ENCODE measurements at regions of chr1 and their contacts with region 1.

Region 1: DNA sequence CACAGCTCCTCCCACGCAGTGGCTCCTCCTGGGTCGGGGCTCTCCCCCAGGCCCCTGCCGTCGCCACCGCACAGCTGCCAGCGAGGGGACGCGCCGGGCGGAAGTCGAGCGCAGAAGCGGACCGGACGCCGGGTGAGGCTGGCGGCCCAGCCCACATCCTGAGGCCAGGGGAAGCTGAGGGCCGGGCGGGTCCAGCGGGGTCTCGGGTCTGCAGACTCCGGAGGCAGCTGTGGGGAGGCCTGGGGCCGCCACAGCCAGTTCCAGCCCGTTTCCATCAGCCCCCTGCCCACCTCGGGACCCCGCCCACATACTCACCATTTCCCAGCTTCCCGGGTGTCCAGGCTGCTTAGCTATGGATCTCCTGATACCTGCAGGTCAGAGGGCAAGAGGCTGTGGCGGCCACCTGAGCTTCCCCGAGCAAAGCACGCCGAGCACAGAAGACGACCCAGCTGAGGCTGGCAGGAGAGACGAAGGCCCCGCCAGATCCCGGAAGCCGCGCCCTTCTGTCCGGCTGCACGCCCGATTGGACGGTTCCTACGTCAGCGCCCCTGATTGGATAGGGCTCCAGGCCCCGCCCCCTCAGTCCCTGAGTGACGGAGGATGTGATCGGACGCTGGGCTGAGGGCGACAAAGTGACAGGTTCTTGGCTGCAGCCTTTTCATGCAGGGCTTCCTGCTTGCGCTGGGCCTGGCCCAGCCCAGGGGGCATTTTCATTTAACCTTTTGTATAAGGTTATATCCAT is 38.7 kb upstream of the ZNF124 start:
- DNase-seq: peak; percentile 88 to 95 (median 91)
- ATAC-seq: peak; percentile 99
- H3K4me3 ChIP-seq: peak overlapping the region; percentile 77
- H3K4me3 Mint-ChIP-seq: peak overlapping the region; percentile 88 to 97 (median 95)
- H3K27ac ChIP-seq: peak overlapping the region; percentile 83
- H3K27ac Mint-ChIP-seq: peak overlapping the region; percentile 92 to 97 (median 94)
- H3K4me1 ChIP-seq: peaks cover 12 to 13% of the 10 kb centered on the region in 2 donors
- H3K4me1 Mint-ChIP-seq: peaks cover 21 to 84% (median 71%) of the 10 kb centered on the region in 7 donors
- H3K27me3 ChIP-seq: no peaks in the 10 kb centered on the region
- H3K27me3 Mint-ChIP-seq: peaks cover 0 to 3% (median 0%) of the 10 kb centered on the region in 5 donors

Region 2: GRCh38 chr1:247078261-247079140 is 132.0 kb before region 1 on chr1 and contains the start of gene ZNF670:
- CTCF ChIA-PET with region 1: no interaction called
- POLR2A ChIA-PET with region 1: interaction called, 8 read pairs
- intact Hi-C with region 1: loop called (anchors 1 kb)
- DNase-seq: peak; percentile 64 to 89 (median 76)
- ATAC-seq: peak; percentile 99
- H3K4me3 ChIP-seq: peak within 1 kb of the TSS; percentile 72
- H3K4me3 Mint-ChIP-seq: peak within 1 kb of the TSS; percentile 84 to 95 (median 92)
- H3K27ac ChIP-seq: peak within 1 kb of the TSS; percentile 69
- H3K27ac Mint-ChIP-seq: peak within 1 kb of the TSS; percentile 71 to 91 (median 82)
- H3K4me1 ChIP-seq: peaks cover 6 to 8% of the 10 kb centered on the region in 2 donors
- H3K4me1 Mint-ChIP-seq: peaks cover 9 to 38% (median 32%) of the 10 kb centered on the region in 7 donors
- H3K27me3 ChIP-seq: no peaks in the 10 kb centered on the region
- H3K27me3 Mint-ChIP-seq: peaks cover 0 to 12% (median 8%) of the 10 kb centered on the region in 5 donors
- total RNA-seq, gene ZNF670: 0.56 to 4.0 (median 1.1) TPM

Region 3: DNA sequence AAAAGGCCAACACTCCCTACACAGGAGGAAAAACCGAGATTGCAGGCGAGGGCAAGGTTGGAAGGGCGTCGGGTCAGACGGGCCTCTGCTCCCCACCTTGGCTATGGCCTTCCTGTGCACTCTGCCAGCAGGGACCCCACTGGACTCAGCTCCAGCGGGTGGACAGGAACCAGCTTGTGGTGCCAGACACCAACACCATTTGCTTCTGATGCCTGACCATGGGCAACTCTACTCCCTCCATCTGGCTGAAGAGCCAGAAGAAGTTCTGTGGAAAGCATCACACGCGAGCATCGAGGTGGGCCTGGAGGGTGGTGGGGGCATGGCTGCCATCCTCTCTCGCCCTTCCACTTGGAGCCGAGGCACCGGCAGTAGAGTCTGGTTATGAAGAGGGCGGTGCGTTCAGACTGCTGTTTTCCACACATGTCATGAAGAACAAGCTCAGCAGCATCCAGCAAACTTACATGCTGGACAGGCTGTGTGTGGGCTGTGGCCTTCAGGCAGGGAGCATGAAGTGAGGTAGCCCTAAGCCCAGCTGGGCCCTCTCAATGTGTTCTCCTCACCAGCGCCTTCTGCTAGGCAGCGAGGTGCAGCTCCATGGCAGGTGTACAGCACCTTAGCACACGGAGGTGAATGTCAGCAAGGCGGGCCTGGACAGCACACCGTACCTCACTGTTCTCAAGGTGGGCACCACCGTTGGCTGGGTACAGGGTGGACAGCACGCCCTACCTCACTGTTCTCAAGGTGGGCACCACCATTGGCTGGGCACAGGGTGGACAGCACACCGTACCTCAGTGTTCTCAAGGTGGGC is 90.7 kb before region 1 on chr1:
- CTCF ChIA-PET with region 1: no interaction called
- POLR2A ChIA-PET with region 1: no interaction called
- intact Hi-C with region 1: loop called in 1 of 2 experiments (anchors 5 kb)
- DNase-seq: no peak
- ATAC-seq: peak; percentile 32
- H3K4me3 ChIP-seq: no peak overlapping the region
- H3K4me3 Mint-ChIP-seq: no peak overlapping the region
- H3K27ac ChIP-seq: no peak overlapping the region
- H3K27ac Mint-ChIP-seq: no peak overlapping the region
- H3K4me1 ChIP-seq: no peaks in the 10 kb centered on the region
- H3K4me1 Mint-ChIP-seq: peaks cover 0 to 3% (median 0%) of the 10 kb centered on the region in 7 donors
- H3K27me3 ChIP-seq: no peaks in the 10 kb centered on the region
- H3K27me3 Mint-ChIP-seq: no peaks in the 10 kb centered on the region

Region 4: GRCh38 chr1:247331172-247331991 is 120.8 kb after region 1 on chr1 and contains the start of gene ZNF496:
- CTCF ChIA-PET with region 1: no interaction called
- POLR2A ChIA-PET with region 1: interaction called, 7 read pairs
- intact Hi-C with region 1: loop called (anchors 1 kb)
- DNase-seq: peak; percentile 46 to 77 (median 67)
- ATAC-seq: peak; percentile 76
- H3K4me3 ChIP-seq: peak within 1 kb of the TSS; percentile 64
- H3K4me3 Mint-ChIP-seq: peak within 1 kb of the TSS; percentile 91 to 99 (median 94)
- H3K27ac ChIP-seq: peak within 1 kb of the TSS; percentile 72
- H3K27ac Mint-ChIP-seq: peak within 1 kb of the TSS in 8 of 9 donors; percentile 77 to 92 (median 86)
- H3K4me1 ChIP-seq: peaks cover 6 to 14% of the 10 kb centered on the region in 2 donors
- H3K4me1 Mint-ChIP-seq: peaks cover 13 to 43% (median 29%) of the 10 kb centered on the region in 7 donors
- H3K27me3 ChIP-seq: no peaks in the 10 kb centered on the region
- H3K27me3 Mint-ChIP-seq: no peaks in the 10 kb centered on the region
- total RNA-seq, gene ZNF496: 9.5 to 25.1 (median 17.3) TPM

Region 5: GRCh38 chr1:247407180-247407616 is 196.7 kb after region 1 on chr1:
- CTCF ChIA-PET with region 1: no interaction called
- POLR2A ChIA-PET with region 1: no interaction called
- intact Hi-C with region 1: loop called in 1 of 2 experiments (anchors 5 kb)
- DNase-seq: peak; percentile 40 to 63 (median 53)
- ATAC-seq: peak; percentile 91
- H3K4me3 ChIP-seq: peak overlapping the region; percentile 30
- H3K4me3 Mint-ChIP-seq: peak overlapping the region; percentile 69 to 89 (median 78)
- H3K27ac ChIP-seq: peak overlapping the region; percentile 50
- H3K27ac Mint-ChIP-seq: peak overlapping the region; percentile 76 to 98 (median 92)
- H3K4me1 ChIP-seq: peaks cover 20 to 33% of the 10 kb centered on the region in 2 donors
- H3K4me1 Mint-ChIP-seq: peaks cover 25 to 42% (median 38%) of the 10 kb centered on the region in 7 donors
- H3K27me3 ChIP-seq: no peaks in the 10 kb centered on the region
- H3K27me3 Mint-ChIP-seq: peaks cover 0 to 46% (median 0%) of the 10 kb centered on the region in 5 donors